H1 (cell line): ENCODE measurements at regions of chr10 and their contacts with region 1.

Region 1: DNA sequence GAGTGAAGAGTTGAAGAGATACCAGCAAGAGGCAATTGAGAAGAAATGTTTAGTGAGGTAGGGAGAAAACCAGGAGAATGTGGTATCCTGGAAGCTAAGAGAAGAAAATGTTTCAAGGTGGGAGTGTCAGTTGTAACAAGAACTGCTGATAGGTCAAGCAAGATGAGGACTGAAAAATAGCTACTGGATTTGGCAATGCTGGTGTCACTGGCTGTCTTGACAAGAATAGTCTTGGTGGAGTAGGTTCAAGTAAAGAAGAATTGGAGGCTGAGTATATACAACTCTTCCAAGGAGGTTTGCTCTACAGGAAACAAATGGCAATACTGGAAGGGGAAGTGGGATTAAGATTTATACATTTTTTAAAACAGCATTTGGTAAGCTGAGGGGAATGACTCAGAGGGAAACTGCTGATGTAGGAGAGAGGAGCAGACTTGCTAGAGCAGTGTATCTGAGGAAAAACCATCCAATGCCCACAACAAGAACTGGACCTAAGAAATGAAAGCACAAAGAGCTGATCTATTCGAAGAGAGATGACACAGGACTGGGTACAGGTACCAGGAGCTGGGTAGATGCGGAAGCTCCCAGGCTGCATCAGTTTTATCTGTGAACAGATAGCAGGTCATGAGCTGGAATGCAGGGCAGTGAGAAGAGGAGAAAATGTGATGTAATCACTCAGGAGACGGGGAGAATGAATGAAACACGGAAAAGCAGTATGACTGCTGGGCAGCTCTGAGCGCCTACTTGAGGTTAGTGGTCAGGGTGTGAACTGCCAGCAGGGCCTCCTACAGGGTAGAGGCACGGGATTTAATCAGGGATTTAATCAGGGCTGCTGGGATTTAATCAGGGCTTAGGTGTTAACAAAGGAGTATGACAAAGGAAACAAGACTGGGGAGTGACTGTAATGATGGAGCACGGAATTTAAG is 34.5 kb downstream of the FAM25A start:
- DNase-seq: no peak
- H3K4me3 ChIP-seq: no peak overlapping the region
- H3K27ac ChIP-seq: no peak overlapping the region
- H3K4me1 ChIP-seq: no peaks in the 10 kb centered on the region
- H3K27me3 ChIP-seq: no peaks in the 10 kb centered on the region
- CTCF ChIP-seq: peak; percentile 14 to 40 (median 19); a peak in 3 of 4 replicates
- EP300 ChIP-seq: no peak
- POLR2A ChIP-seq: no peak
- RAD21 ChIP-seq: peak; percentile 16 to 36; a peak in 3 of 4 replicates

Region 2: GRCh38 chr10:86936661-86937501 is 117.8 kb before region 1 on chr10:
- CTCF ChIA-PET with region 1: interaction called, 23 read pairs
- POLR2A ChIA-PET with region 1: no interaction called
- DNase-seq: no peak
- H3K4me3 ChIP-seq: no peak overlapping the region
- H3K27ac ChIP-seq: no peak overlapping the region
- H3K4me1 ChIP-seq: no peaks in the 10 kb centered on the region; a peak in 1 of 7 replicates
- H3K27me3 ChIP-seq: 0 out of 7 replicates have a peak, but pooled peaks cover 0 to 3% (median 0%) of the 10 kb centered on the region in 4 experiments
- CTCF ChIP-seq: no peak
- EP300 ChIP-seq: no peak
- POLR2A ChIP-seq: no peak
- RAD21 ChIP-seq: no peak

Region 3: DNA sequence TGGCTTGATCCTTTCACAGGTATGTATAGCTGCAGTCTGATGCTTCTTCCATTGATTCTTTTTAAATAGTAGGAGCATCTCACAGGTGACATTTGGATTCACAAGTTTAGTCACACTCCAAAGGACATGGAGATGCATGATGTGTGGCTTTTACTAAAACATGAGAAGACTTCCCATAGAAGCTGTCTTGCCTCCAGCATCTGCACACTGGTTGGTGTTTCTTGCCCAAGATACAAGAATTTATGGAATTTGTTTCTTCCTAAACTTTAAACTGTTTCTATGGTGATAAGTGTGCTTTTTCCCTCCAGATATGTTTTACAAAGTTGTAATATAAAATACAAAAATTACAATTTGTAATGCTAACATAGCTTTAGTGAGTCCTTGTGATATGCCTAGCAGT is 62.2 kb before region 1 on chr10:
- CTCF ChIA-PET with region 1: no interaction called
- POLR2A ChIA-PET with region 1: no interaction called
- DNase-seq: no peak
- H3K4me3 ChIP-seq: no peak overlapping the region
- H3K27ac ChIP-seq: no peak overlapping the region
- H3K4me1 ChIP-seq: no peaks in the 10 kb centered on the region
- H3K27me3 ChIP-seq: no peaks in the 10 kb centered on the region
- CTCF ChIP-seq: no peak
- EP300 ChIP-seq: no peak
- POLR2A ChIP-seq: no peak
- RAD21 ChIP-seq: no peak

Region 4: GRCh38 chr10:87085537-87085936 is 30.9 kb after region 1 on chr10:
- CTCF ChIA-PET with region 1: no interaction called
- POLR2A ChIA-PET with region 1: no interaction called
- DNase-seq: no peak
- H3K4me3 ChIP-seq: no peak overlapping the region
- H3K27ac ChIP-seq: no peak overlapping the region
- H3K4me1 ChIP-seq: no peaks in the 10 kb centered on the region
- H3K27me3 ChIP-seq: no peaks in the 10 kb centered on the region
- CTCF ChIP-seq: no peak
- EP300 ChIP-seq: no peak
- POLR2A ChIP-seq: no peak
- RAD21 ChIP-seq: no peak